ENCODE measurements at regions of chr9 and their contacts with region 1.

Region 1: DNA sequence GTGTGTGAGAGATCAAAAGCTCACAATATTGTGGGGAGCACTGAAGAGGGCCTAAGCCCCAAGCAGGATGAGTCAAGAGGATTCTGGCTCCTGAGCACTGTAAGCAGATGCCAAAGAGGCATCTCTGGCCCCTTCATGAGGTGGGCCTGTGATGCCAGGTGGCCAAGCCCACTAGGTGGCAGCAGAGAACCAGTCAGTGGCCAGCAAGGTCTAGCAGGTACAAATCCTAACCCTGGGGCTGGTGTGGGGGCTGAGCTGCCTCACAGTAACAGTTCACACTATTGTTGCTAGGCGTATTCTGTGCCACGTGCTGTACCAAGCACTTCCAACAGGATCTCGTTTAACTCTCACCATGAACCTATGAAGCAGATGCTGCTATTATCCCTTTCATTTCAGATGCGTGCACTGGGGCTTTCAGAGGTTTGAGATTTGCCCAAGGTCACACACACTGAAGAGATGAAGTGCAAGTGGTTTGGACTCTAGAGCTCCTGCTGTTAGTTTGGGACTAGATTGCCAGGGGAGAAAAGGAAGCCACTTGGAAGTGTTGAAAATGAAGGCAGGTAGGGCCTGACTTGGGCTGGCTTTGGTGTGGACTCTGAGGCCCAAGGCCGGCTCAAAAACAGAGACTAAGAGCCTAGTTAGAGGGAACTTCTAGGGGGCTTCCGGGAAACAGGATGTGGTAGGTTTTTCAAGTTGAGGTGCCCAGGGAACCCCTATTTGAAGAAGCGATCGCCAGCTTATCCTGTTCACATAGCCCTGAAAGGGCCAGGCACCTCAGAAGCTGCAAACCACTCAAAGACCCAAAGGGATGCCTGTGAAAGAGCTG is 4.4 kb upstream of the MLANA start:
- DNase-seq: peak; percentile 64 to 83 (median 73)
- H3K4me3 ChIP-seq: no peak overlapping the region
- H3K27ac ChIP-seq: no peak overlapping the region
- H3K27me3 ChIP-seq: no peaks in the 10 kb centered on the region
- CTCF ChIP-seq: peak; percentile 60 to 97 (median 90)

Region 2: GRCh38 chr9:5799314-5799713 is 87.0 kb before region 1 on chr9:
- intact Hi-C with region 1: loop called in 1 of 2 experiments (anchors 5 kb)
- DNase-seq: peak in 1 of 10 donors; percentile 57
- H3K4me3 ChIP-seq: peak overlapping the region in 52 of 59 donors; percentile 6 to 63 (median 40)
- H3K27ac ChIP-seq: peak overlapping the region in 28 of 59 donors; percentile 2 to 77 (median 45)
- H3K27me3 ChIP-seq: no peaks in the 10 kb centered on the region
- CTCF ChIP-seq: peak; percentile 48 to 91 (median 78)

Region 3: DNA sequence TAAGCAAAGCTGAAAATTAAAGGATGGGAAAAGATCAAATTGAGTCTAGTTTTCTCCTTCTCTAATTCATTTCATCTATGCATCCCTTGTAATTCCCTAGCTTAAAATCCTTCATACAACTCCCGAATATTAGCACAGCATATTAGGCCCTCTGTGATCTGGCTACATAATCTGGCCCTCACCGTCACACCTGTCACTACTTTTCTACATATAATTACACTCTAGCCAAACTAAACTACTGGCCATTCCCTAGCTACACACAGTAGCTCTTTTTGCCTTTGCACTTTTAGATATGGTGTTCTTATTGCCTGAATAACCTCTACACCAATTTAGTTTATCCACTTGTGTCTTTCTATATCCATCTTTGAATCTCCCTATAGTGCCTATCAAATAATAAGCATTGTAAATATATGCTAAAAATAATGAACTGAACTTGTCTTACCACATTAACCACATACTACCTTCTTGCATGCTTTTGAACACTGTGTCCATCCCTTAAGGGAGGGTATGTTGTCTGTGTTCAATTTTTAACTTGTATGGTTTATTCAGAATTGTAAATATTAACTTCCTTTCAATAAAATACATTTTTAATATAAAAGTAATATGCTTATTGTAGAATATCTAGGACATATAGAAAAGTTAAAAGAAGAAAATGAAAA is 113.2 kb after region 1 on chr9:
- intact Hi-C with region 1: no loop called
- DNase-seq: no peak
- H3K4me3 ChIP-seq: no peak overlapping the region
- H3K27ac ChIP-seq: no peak overlapping the region
- H3K27me3 ChIP-seq: no peaks in the 10 kb centered on the region
- CTCF ChIP-seq: no peak

Region 4: GRCh38 chr9:6015278-6016157 is 129.2 kb after region 1 on chr9 and contains the start of gene RANBP6:
- intact Hi-C with region 1: loop called in 1 of 2 experiments (anchors 5 kb)
- DNase-seq: peak; percentile 88 to 96 (median 94)
- H3K4me3 ChIP-seq: peak within 1 kb of the TSS; percentile 39 to 98 (median 84)
- H3K27ac ChIP-seq: peak within 1 kb of the TSS; percentile 6 to 97 (median 86)
- H3K27me3 ChIP-seq: no peaks in the 10 kb centered on the region
- CTCF ChIP-seq: peak in 23 of 56 donors; percentile 6 to 51 (median 23)
- total RNA-seq, gene RANBP6: 17.7 to 48.0 (median 33.6) TPM

Region 5: GRCh38 chr9:6055213-6055612 is 168.9 kb after region 1 on chr9:
- intact Hi-C with region 1: loop called (anchors 2 to 10 kb)
- DNase-seq: peak in 2 of 10 donors; percentile 9 to 15
- H3K4me3 ChIP-seq: no peak overlapping the region
- H3K27ac ChIP-seq: no peak overlapping the region
- H3K27me3 ChIP-seq: no peaks in the 10 kb centered on the region
- CTCF ChIP-seq: peak; percentile 48 to 75 (median 66)

Region 6: GRCh38 chr9:6305954-6306563 is 419.7 kb after region 1 on chr9:
- intact Hi-C with region 1: loop called in 1 of 2 experiments (anchors 10 kb)
- DNase-seq: no peak
- H3K4me3 ChIP-seq: no peak overlapping the region
- H3K27ac ChIP-seq: no peak overlapping the region
- H3K27me3 ChIP-seq: peaks cover 0 to 9% (median 0%) of the 10 kb centered on the region in 45 donors
- CTCF ChIP-seq: peak; percentile 23 to 88 (median 71)